ENCODE measurements at regions of chr1 and their contacts with region 1.

Region 1: GRCh38 chr1:8913111-8913856 is 32.4 kb upstream of the CA6 start:
- DNase-seq: no peak
- ATAC-seq: no peak
- H3K4me3 ChIP-seq: no peak overlapping the region
- H3K4me3 Mint-ChIP-seq: no peak overlapping the region
- H3K27ac ChIP-seq: no peak overlapping the region
- H3K27ac Mint-ChIP-seq: peak overlapping the region in 2 of 9 donors; percentile 3 to 20
- H3K4me1 ChIP-seq: peaks cover 0 to 2% of the 10 kb centered on the region in 2 donors
- H3K4me1 Mint-ChIP-seq: peaks cover 4 to 36% (median 5%) of the 10 kb centered on the region in 7 donors
- H3K27me3 ChIP-seq: no peaks in the 10 kb centered on the region
- H3K27me3 Mint-ChIP-seq: peaks cover 0 to 4% (median 0%) of the 10 kb centered on the region in 5 donors

Region 2: DNA sequence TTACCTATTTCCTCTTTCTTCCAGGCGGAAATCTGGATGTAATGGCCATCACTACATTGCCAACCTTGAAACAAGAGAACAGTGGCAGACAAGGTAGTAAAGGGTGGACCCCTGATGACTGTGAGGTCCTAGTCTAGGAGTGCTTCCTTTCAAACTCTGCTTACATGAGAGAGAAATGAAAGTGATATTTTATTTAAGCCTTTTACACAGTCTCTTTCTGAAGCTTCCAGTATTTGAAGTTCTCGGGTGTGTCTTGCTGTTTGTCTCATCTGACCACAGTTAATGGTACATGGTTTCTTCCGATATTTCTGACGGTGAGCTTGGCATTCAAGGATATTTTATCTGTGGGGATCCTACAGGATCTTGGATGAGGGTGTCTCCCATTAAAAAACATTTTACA is 380.2 kb before region 1 on chr1:
- CTCF ChIA-PET with region 1: no interaction called
- POLR2A ChIA-PET with region 1: no interaction called
- intact Hi-C with region 1: no loop called
- DNase-seq: peak in 3 of 9 donors; percentile 24 to 41 (median 32)
- ATAC-seq: peak; percentile 64
- H3K4me3 ChIP-seq: peak overlapping the region; percentile 20
- H3K4me3 Mint-ChIP-seq: peak overlapping the region; percentile 49 to 87 (median 80)
- H3K27ac ChIP-seq: peak overlapping the region; percentile 62
- H3K27ac Mint-ChIP-seq: peak overlapping the region; percentile 90 to 97 (median 95)
- H3K4me1 ChIP-seq: peaks cover 0 to 17% of the 10 kb centered on the region in 2 donors
- H3K4me1 Mint-ChIP-seq: peaks cover 9 to 42% (median 29%) of the 10 kb centered on the region in 7 donors
- H3K27me3 ChIP-seq: no peaks in the 10 kb centered on the region
- H3K27me3 Mint-ChIP-seq: no peaks in the 10 kb centered on the region

Region 3: GRCh38 chr1:8925406-8925805 is 12.1 kb after region 1 on chr1:
- CTCF ChIA-PET with region 1: interaction called, 6 read pairs
- POLR2A ChIA-PET with region 1: interaction called, 11 read pairs
- intact Hi-C with region 1: loop called in 1 of 2 experiments (anchors 1 kb)
- DNase-seq: no peak
- ATAC-seq: no peak
- H3K4me3 ChIP-seq: peak overlapping the region; percentile 56
- H3K4me3 Mint-ChIP-seq: no peak overlapping the region
- H3K27ac ChIP-seq: peak overlapping the region; percentile 69
- H3K27ac Mint-ChIP-seq: no peak overlapping the region
- H3K4me1 ChIP-seq: peaks cover 0 to 64% of the 10 kb centered on the region in 2 donors
- H3K4me1 Mint-ChIP-seq: peaks cover 16 to 36% (median 24%) of the 10 kb centered on the region in 7 donors
- H3K27me3 ChIP-seq: no peaks in the 10 kb centered on the region
- H3K27me3 Mint-ChIP-seq: no peaks in the 10 kb centered on the region

Region 4: DNA sequence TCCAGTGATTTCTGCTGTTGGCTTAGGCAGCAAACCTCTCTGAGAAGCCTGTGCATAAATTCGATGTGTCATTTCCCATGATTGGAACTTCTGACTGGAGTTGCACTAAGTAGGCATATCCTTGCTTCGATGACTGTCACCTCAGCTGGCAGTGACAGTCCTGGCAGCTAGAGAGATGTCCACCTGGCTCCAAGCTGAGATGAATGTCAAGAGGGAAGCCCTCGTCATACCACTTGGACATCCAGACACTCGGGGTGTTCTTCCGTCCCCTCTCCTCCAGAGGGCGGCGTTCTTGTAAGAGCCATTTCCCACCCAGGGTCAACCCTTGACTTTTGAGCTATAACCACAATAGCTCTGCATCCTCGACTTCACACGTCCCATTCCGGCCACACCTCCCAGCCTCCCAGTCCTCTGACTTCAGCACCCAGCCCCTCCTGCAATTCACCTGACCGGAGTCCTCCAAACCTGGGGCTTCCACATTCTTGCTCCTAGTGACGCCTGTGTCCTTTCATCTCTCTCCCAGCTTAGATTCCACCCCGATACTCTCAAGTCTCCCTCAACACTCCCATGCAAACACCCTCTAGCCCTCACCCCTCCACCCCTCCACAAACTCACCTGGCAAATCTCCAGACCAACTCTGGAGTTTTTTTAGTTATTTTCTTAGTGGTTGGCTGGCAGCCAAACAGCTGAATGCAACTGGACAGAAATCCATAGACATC is 49.7 kb after region 1 on chr1:
- CTCF ChIA-PET with region 1: interaction called, 24 read pairs
- POLR2A ChIA-PET with region 1: interaction called, 66 read pairs
- intact Hi-C with region 1: loop called in 1 of 2 experiments (anchors 2 kb)
- DNase-seq: peak in 2 of 9 donors; percentile 32 to 38
- ATAC-seq: peak; percentile 74
- H3K4me3 ChIP-seq: no peak overlapping the region
- H3K4me3 Mint-ChIP-seq: peak overlapping the region; percentile 50 to 100 (median 74)
- H3K27ac ChIP-seq: peak overlapping the region; percentile 58
- H3K27ac Mint-ChIP-seq: peak overlapping the region; percentile 49 to 97 (median 89)
- H3K4me1 ChIP-seq: peaks cover 5 to 55% of the 10 kb centered on the region in 2 donors
- H3K4me1 Mint-ChIP-seq: peaks cover 42 to 86% (median 80%) of the 10 kb centered on the region in 7 donors
- H3K27me3 ChIP-seq: no peaks in the 10 kb centered on the region
- H3K27me3 Mint-ChIP-seq: no peaks in the 10 kb centered on the region

Region 5: GRCh38 chr1:8987881-8988617 is 74.8 kb after region 1 on chr1:
- CTCF ChIA-PET with region 1: interaction called, 158 read pairs
- POLR2A ChIA-PET with region 1: interaction called, 127 read pairs
- intact Hi-C with region 1: loop called (anchors 1 kb)
- DNase-seq: peak; percentile 19 to 78 (median 65)
- ATAC-seq: peak; percentile 89
- H3K4me3 ChIP-seq: no peak overlapping the region
- H3K4me3 Mint-ChIP-seq: peak overlapping the region; percentile 36 to 85 (median 73)
- H3K27ac ChIP-seq: peak overlapping the region; percentile 65
- H3K27ac Mint-ChIP-seq: peak overlapping the region; percentile 57 to 99 (median 93)
- H3K4me1 ChIP-seq: peaks cover 4 to 22% of the 10 kb centered on the region in 2 donors
- H3K4me1 Mint-ChIP-seq: peaks cover 9 to 63% (median 41%) of the 10 kb centered on the region in 7 donors
- H3K27me3 ChIP-seq: no peaks in the 10 kb centered on the region
- H3K27me3 Mint-ChIP-seq: no peaks in the 10 kb centered on the region

Measured in naive thymus-derived CD4-positive, alpha-beta T cell (primary cell).